GM12878 (cell line): ENCODE measurements at regions of chr3 and their contacts with region 1.

Region 1: GRCh38 chr3:119600732-119601131 is 3.0 kb downstream of the PLA1A start:
- DNase-seq: peak; percentile 85
- ATAC-seq: peak; percentile 81
- H3K4me3 ChIP-seq: no peak overlapping the region
- H3K27ac ChIP-seq: peak overlapping the region; percentile 87
- H3K4me1 ChIP-seq: peaks cover 62% of the 10 kb centered on the region
- H3K27me3 ChIP-seq: no peaks in the 10 kb centered on the region
- CTCF ChIP-seq: peak; percentile 88 to 96 (median 91); a peak in 5 of 6 replicates
- EP300 ChIP-seq: no peak
- POLR2A ChIP-seq: peak; percentile 66
- RAD21 ChIP-seq: peak; percentile 82

Region 2: GRCh38 chr3:119463171-119464169 is 137.3 kb before region 1 on chr3 and contains the start of gene TMEM39A:
- CTCF ChIA-PET with region 1: interaction called, 8 read pairs
- POLR2A ChIA-PET with region 1: interaction called, 11 read pairs
- RAD21 ChIA-PET with region 1: interaction called, 19 read pairs
- SMC1A ChIA-PET with region 1: interaction called, 5 read pairs
- in situ Hi-C with region 1: no loop called
- intact Hi-C with region 1: no loop called
- DNase-seq: peak; percentile 96
- ATAC-seq: peak; percentile 93
- H3K4me3 ChIP-seq: peak within 1 kb of the TSS; percentile 97
- H3K27ac ChIP-seq: peak within 1 kb of the TSS; percentile 90
- H3K4me1 ChIP-seq: peaks cover 9% of the 10 kb centered on the region
- H3K27me3 ChIP-seq: no peaks in the 10 kb centered on the region
- CTCF ChIP-seq: no peak
- EP300 ChIP-seq: peak; percentile 10 to 83; a peak in 2 of 4 replicates
- POLR2A ChIP-seq: peak; percentile 96
- RAD21 ChIP-seq: no peak
- polyA plus RNA-seq, gene TMEM39A: 10.8 to 21.2 TPM

Region 3: GRCh38 chr3:119559441-119559963 is 41.2 kb before region 1 on chr3 and contains the start of gene CD80:
- CTCF ChIA-PET with region 1: interaction called, 60 read pairs
- POLR2A ChIA-PET with region 1: interaction called, 104 read pairs
- RAD21 ChIA-PET with region 1: interaction called, 239 read pairs
- SMC1A ChIA-PET with region 1: interaction called, 151 read pairs
- in situ Hi-C with region 1: no loop called
- intact Hi-C with region 1: loop called (anchors 1 kb)
- DNase-seq: peak; percentile 82
- ATAC-seq: peak; percentile 72
- H3K4me3 ChIP-seq: peak within 1 kb of the TSS; percentile 76
- H3K27ac ChIP-seq: peak within 1 kb of the TSS; percentile 98
- H3K4me1 ChIP-seq: peaks cover 22% of the 10 kb centered on the region
- H3K27me3 ChIP-seq: no peaks in the 10 kb centered on the region
- CTCF ChIP-seq: peak; percentile 66 to 81 (median 68)
- EP300 ChIP-seq: peak in 1 of 2 experiments; percentile 22; a peak in 1 of 4 replicates
- POLR2A ChIP-seq: peak; percentile 67; the same call in 1 of the 2 replicates
- RAD21 ChIP-seq: peak; percentile 67
- polyA plus RNA-seq, gene CD80: 42.5 to 54.1 TPM

Region 4: DNA sequence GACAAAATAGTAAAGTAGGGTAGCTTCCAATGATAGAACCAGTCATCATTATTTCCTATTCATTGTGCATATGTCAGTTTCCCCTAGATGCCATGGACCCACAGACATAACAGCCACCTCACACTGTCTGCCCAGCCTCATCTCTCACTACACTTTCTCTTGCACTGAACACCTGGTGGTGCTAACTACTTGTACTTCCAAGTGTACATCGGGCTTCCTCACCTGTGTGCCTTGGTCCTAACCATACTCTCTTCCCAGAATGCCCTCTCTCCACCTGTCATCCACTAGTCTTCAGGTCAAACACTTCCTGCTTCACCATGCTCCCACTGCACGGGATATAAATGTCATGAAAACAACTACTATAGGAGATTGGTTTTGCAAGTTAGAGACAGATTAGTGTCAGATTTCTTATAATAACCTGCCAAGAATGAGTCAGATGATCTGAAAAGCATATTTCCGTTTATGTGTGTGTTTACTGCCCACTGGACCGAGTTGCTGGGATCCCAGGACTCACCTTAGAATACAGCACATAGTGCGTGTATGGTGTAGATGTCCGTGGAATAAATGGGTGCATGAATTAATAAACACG is 18.3 kb after region 1 on chr3:
- CTCF ChIA-PET with region 1: interaction called, 6 read pairs
- POLR2A ChIA-PET with region 1: interaction called, 3 read pairs
- RAD21 ChIA-PET with region 1: interaction called, 3 read pairs
- SMC1A ChIA-PET with region 1: interaction called, 12 read pairs
- in situ Hi-C with region 1: no loop called
- intact Hi-C with region 1: no loop called
- DNase-seq: no peak
- ATAC-seq: no peak
- H3K4me3 ChIP-seq: no peak overlapping the region
- H3K27ac ChIP-seq: no peak overlapping the region
- H3K4me1 ChIP-seq: no peaks in the 10 kb centered on the region
- H3K27me3 ChIP-seq: no peaks in the 10 kb centered on the region
- CTCF ChIP-seq: peak in 1 of 3 experiments; percentile 19; a peak in 1 of 6 replicates
- EP300 ChIP-seq: no peak
- POLR2A ChIP-seq: no peak
- RAD21 ChIP-seq: peak; percentile 43; the same call in 1 of the 2 replicates

Region 5: GRCh38 chr3:119662604-119663373 is 62.1 kb after region 1 on chr3:
- CTCF ChIA-PET with region 1: interaction called, 71 read pairs
- POLR2A ChIA-PET with region 1: interaction called, 9 read pairs
- RAD21 ChIA-PET with region 1: interaction called, 52 read pairs
- SMC1A ChIA-PET with region 1: interaction called, 22 read pairs
- in situ Hi-C with region 1: no loop called
- intact Hi-C with region 1: no loop called
- DNase-seq: no peak
- ATAC-seq: peak; percentile 45
- H3K4me3 ChIP-seq: no peak overlapping the region
- H3K27ac ChIP-seq: peak overlapping the region; percentile 38
- H3K4me1 ChIP-seq: peaks cover 30% of the 10 kb centered on the region
- H3K27me3 ChIP-seq: no peaks in the 10 kb centered on the region
- CTCF ChIP-seq: no peak; a peak in 1 of 6 replicates
- EP300 ChIP-seq: no peak
- POLR2A ChIP-seq: no peak
- RAD21 ChIP-seq: no peak; the same call in 1 of the 2 replicates